ENCODE measurements at regions of chr14 and their contacts with region 1.

Region 1: GRCh38 chr14:73825551-73826188 is 26.0 kb upstream of the PTGR2 start:
- DNase-seq: peak; percentile 96
- H3K4me3 ChIP-seq: no peak overlapping the region
- H3K27ac ChIP-seq: peak overlapping the region; percentile 2 to 53 (median 22)
- H3K4me1 ChIP-seq: peaks cover 0 to 10% (median 6%) of the 10 kb centered on the region in 4 donors
- H3K27me3 ChIP-seq: no peaks in the 10 kb centered on the region
- CTCF ChIP-seq: peak; percentile 66 to 95 (median 92)
- EP300 ChIP-seq: no peak
- POLR2A ChIP-seq: no peak

Region 2: DNA sequence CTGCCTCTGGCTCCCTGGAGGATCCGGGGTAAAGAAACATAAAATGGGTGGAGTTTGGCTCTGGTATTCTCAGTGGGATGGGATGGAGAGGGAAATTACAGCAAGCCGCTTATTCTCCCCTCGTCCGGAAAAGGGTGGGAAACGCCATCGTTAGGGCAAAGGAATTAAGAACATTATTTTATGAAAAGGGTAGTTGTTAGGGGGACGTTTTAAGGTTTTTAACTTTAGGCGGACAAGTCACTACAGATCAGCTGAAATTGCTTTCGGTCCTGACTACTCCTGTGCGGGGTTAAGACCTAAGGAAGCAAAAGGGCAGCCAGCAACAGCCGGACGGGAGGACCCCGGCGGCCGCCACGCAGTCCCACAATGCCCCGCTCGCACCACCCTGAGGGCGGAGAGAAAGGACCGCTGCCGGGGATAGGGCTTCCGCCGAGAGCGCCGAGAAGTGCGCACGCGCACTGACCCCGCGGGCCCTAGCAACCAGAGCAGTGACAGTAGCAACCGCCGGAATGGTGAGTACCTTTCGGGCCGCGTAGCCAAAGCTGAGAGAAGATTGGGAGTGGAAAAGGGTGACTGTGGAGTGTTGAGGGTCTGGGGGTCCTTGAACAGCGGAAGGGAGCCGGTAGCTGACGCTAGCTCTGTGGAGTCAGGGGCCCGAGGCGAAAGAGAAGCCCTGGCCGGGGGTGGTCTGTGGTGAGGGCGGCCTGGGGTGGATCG is 181.0 kb before region 1 on chr14 and contains the start of gene DNAL1:
- intact Hi-C with region 1: loop called (anchors 10 kb)
- DNase-seq: peak; percentile 96
- H3K4me3 ChIP-seq: peak within 1 kb of the TSS; percentile 53 to 73 (median 71)
- H3K27ac ChIP-seq: peak within 1 kb of the TSS; percentile 85 to 91 (median 88)
- H3K4me1 ChIP-seq: peaks cover 0 to 20% (median 15%) of the 10 kb centered on the region in 4 donors
- H3K27me3 ChIP-seq: no peaks in the 10 kb centered on the region
- CTCF ChIP-seq: no peak
- EP300 ChIP-seq: no peak
- POLR2A ChIP-seq: peak; percentile 60 to 64
- total RNA-seq, gene DNAL1: 5.6 to 20.0 (median 9.6) TPM

Region 3: DNA sequence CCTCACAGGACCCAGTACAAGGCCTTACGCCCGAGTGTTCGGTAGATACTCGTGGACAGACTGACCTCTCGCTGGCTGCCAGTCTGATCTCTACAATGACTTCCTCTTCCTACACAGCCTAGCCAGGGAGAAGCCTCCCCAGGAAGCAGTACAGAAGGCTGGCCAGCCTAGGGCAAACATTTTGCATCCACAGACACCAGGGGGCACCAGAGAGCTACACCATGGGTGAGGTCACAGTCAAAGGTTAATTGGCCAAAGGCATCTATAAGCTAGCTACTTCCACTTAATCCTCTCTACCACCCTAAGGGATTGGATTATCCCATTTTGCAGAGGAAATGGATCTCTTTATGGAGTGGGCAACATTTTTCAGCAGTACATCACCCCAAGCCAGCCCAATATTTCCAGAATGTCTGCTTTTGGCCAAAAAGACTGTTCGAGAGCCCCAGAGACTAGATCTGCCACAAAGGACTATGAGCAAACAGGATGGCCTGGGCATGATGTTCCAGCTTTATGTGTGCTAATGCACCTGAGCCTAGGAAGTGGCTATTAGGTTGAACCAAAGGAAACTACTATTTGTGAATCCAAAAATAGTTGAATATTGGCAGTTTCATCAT is 96.8 kb before region 1 on chr14:
- intact Hi-C with region 1: loop called (anchors 1 kb)
- DNase-seq: peak; percentile 92
- H3K4me3 ChIP-seq: no peak overlapping the region
- H3K27ac ChIP-seq: peak overlapping the region; percentile 68 to 99 (median 88)
- H3K4me1 ChIP-seq: peaks cover 0 to 82% (median 68%) of the 10 kb centered on the region in 4 donors
- H3K27me3 ChIP-seq: no peaks in the 10 kb centered on the region
- CTCF ChIP-seq: peak; percentile 91 to 98 (median 96)
- EP300 ChIP-seq: no peak
- POLR2A ChIP-seq: no peak

Region 4: DNA sequence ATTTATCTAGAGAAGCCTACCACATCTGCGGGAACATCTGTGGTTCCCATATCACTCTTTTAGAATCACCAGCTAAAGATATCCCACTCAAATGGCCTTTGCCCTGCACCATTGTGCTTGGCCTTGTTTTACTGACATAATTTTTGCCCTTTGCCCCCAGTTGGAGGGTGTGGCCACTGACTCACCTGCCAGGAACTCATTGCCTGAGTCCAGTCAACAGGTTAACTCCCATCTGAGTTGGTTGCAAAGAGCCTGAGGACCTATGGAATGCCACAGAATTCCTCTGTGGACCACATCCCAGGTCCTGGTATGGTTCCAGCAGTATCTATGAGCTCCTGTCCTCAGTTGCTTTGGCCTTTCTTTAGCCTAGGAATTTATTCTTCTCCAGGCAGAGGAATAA is 29.7 kb before region 1 on chr14:
- intact Hi-C with region 1: loop called (anchors 2 kb)
- DNase-seq: peak; percentile 43
- H3K4me3 ChIP-seq: no peak overlapping the region
- H3K27ac ChIP-seq: peak overlapping the region in 2 of 4 donors; percentile 65 to 98
- H3K4me1 ChIP-seq: peaks cover 0 to 41% (median 22%) of the 10 kb centered on the region in 4 donors
- H3K27me3 ChIP-seq: no peaks in the 10 kb centered on the region
- CTCF ChIP-seq: no peak
- EP300 ChIP-seq: no peak
- POLR2A ChIP-seq: no peak

Measured in sigmoid colon (tissue), 7 donors.